ENCODE measurements at regions of chr7 and their contacts with region 1.

Region 1: GRCh38 chr7:70595753-70596597 is 536.0 kb upstream of the GALNT17 start:
- DNase-seq: peak; percentile 10
- H3K4me3 ChIP-seq: no peak overlapping the region
- H3K27ac ChIP-seq: no peak overlapping the region
- H3K4me1 ChIP-seq: no peaks in the 10 kb centered on the region
- H3K27me3 ChIP-seq: peaks cover 36% of the 10 kb centered on the region
- CTCF ChIP-seq: no peak

Region 2: DNA sequence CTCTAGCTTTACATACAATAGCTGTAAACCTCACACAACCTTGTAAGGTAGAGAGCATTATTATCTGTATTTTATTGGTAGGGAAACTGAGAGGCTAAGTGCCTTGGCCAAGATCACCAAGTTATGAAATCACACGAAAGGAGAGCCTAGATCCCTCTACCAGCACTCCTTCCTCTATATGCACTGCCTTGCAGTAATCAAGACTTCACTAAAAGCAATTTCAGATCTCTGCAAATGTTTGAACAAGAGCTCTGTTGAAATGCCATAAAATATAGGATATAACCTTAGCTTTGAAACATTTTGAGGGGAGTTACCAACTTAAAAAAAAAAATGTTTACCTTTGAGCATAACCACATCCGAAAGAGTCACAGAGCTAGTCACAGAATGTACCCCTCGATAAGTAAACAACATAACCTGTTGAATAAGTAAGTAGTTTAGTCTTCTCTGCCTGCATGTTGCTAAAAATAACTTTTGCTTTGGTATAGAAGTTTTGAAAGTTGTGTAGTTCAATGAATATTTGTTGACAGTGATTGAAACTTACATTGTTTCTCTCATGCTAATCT is 288.4 kb before region 1 on chr7:
- CTCF ChIA-PET with region 1: no interaction called
- POLR2A ChIA-PET with region 1: no interaction called
- intact Hi-C with region 1: no loop called
- DNase-seq: no peak
- H3K4me3 ChIP-seq: no peak overlapping the region
- H3K27ac ChIP-seq: no peak overlapping the region
- H3K4me1 ChIP-seq: peaks cover 4% of the 10 kb centered on the region
- H3K27me3 ChIP-seq: no peaks in the 10 kb centered on the region
- CTCF ChIP-seq: no peak

Region 3: DNA sequence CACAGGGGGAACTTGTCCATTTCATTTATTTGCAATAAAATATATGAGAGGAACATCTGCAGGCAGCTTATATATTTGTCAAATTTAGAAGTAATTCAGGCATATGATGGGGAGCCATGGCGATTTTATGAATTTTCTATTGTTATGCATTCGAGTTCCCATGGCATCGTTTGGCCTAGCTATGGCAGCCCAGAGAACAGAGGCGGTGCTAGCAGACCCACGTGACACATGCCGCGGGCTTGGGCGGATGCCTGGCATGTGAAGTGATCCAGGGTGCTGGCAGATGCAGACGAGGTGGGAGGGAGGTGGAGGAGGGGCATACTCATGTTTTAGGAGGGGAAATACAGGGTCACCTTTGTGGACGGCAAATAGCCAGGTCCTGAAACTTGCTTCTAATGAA is 24.0 kb before region 1 on chr7:
- CTCF ChIA-PET with region 1: no interaction called
- POLR2A ChIA-PET with region 1: interaction called, 10 read pairs
- intact Hi-C with region 1: no loop called
- DNase-seq: no peak
- H3K4me3 ChIP-seq: no peak overlapping the region
- H3K27ac ChIP-seq: no peak overlapping the region
- H3K4me1 ChIP-seq: peaks cover 15% of the 10 kb centered on the region
- H3K27me3 ChIP-seq: peaks cover 24% of the 10 kb centered on the region
- CTCF ChIP-seq: no peak